Cardiac septum (tissue), 1 donor: ENCODE measurements at regions of chr1 and their contacts with region 1.

Region 1: GRCh38 chr1:86499987-86500593 is 31.4 kb downstream of the CLCA1 start:
- DNase-seq: no peak

Region 2: GRCh38 chr1:86380257-86380861 is 119.7 kb before region 1 on chr1:
- intact Hi-C with region 1: loop called (anchors 5 kb)
- DNase-seq: no peak

Region 3: GRCh38 chr1:86450847-86451246 is 49.2 kb before region 1 on chr1:
- intact Hi-C with region 1: no loop called
- DNase-seq: no peak

Region 4: DNA sequence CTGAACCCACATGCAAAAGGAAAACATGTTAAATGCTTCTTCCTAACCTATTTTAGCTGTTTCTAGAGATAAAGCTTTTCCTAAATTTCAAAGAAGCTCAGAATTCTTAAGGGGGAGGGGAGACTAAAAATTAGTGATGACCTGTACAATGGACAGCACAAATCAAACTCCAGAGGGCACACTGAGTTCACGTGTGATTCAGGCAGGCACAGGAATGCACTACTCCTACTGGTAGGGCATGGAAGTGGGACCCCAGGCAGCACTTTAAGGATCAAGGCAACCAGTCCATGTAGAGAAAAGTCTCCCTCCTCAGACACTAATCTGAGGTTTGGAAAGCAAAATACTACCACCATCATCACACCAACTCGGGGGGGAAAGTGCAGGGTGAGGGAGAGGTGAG is 15.5 kb after region 1 on chr1:
- intact Hi-C with region 1: no loop called
- DNase-seq: no peak

Region 5: DNA sequence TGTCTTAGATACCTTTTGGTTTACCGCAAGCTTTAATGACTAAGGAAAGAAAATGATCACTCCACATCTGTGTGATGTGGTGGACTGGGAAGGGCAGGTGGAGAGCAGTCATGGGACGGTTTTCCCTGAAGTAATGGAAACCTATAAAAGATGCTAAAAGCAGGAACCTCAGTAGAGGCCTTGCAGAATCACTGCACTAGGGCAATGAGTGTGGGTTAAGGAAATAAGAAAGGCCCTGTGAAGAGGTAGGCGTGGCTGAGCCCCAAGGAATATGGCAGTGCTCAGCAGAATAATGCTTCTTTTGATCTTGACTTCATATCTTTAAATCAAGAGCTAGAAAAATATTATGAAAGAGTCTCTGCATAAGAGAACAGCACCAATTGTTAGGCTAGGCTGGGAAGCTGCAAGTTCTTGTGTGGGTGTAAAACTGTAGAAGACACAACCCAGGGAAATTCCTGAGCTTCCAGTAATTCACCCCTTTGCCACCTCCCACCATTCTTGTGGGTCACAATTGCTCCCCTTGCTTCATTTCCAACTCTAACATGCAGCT is 96.7 kb after region 1 on chr1:
- intact Hi-C with region 1: no loop called
- DNase-seq: no peak